PC-3 (cell line): ENCODE measurements at regions of chr7 and their contacts with region 1.

Region 1: GRCh38 chr7:44372560-44373417 is 47.4 kb upstream of the CAMK2B start:
- DNase-seq: peak; percentile 61
- ATAC-seq: peak; percentile 31
- H3K4me3 ChIP-seq: no peak overlapping the region
- H3K27ac ChIP-seq: 0 out of 2 replicates have a peak overlapping the region, but pooled peaks have one; percentile 7
- H3K4me1 ChIP-seq: peaks cover 32% of the 10 kb centered on the region
- H3K27me3 ChIP-seq: no peaks in the 10 kb centered on the region
- CTCF ChIP-seq: no peak

Region 2: GRCh38 chr7:44348300-44348699 is 24.5 kb before region 1 on chr7:
- CTCF ChIA-PET with region 1: no interaction called
- POLR2A ChIA-PET with region 1: no interaction called
- intact Hi-C with region 1: loop called (anchors 2 kb)
- DNase-seq: peak; percentile 50
- ATAC-seq: peak; percentile 55
- H3K4me3 ChIP-seq: no peak overlapping the region
- H3K27ac ChIP-seq: no peak overlapping the region
- H3K4me1 ChIP-seq: peaks cover 12% of the 10 kb centered on the region; the same call in 1 of the 2 replicates
- H3K27me3 ChIP-seq: no peaks in the 10 kb centered on the region
- CTCF ChIP-seq: peak; percentile 57

Region 3: GRCh38 chr7:44530990-44531389 is 158.2 kb after region 1 on chr7:
- CTCF ChIA-PET with region 1: no interaction called
- POLR2A ChIA-PET with region 1: no interaction called
- intact Hi-C with region 1: no loop called
- DNase-seq: no peak
- ATAC-seq: no peak
- H3K4me3 ChIP-seq: no peak overlapping the region
- H3K27ac ChIP-seq: no peak overlapping the region
- H3K4me1 ChIP-seq: no peaks in the 10 kb centered on the region
- H3K27me3 ChIP-seq: no peaks in the 10 kb centered on the region
- CTCF ChIP-seq: no peak